ENCODE measurements at regions of chr19 and their contacts with region 1.

Region 1: GRCh38 chr19:56314562-56315077 is at the start of gene ZSCAN5A:
- DNase-seq: peak; percentile 92
- ATAC-seq: peak; percentile 80
- H3K4me3 Mint-ChIP-seq: peak within 1 kb of the TSS; percentile 95
- H3K27ac Mint-ChIP-seq: peak within 1 kb of the TSS; percentile 100
- H3K4me1 Mint-ChIP-seq: peaks cover 12% of the 10 kb centered on the region
- H3K27me3 Mint-ChIP-seq: no peaks in the 10 kb centered on the region
- CTCF ChIP-seq: no peak
- total RNA-seq, gene ZSCAN5A: 9.0 to 10.4 TPM (median 9.8 TPM) in 3 replicates

Region 2: DNA sequence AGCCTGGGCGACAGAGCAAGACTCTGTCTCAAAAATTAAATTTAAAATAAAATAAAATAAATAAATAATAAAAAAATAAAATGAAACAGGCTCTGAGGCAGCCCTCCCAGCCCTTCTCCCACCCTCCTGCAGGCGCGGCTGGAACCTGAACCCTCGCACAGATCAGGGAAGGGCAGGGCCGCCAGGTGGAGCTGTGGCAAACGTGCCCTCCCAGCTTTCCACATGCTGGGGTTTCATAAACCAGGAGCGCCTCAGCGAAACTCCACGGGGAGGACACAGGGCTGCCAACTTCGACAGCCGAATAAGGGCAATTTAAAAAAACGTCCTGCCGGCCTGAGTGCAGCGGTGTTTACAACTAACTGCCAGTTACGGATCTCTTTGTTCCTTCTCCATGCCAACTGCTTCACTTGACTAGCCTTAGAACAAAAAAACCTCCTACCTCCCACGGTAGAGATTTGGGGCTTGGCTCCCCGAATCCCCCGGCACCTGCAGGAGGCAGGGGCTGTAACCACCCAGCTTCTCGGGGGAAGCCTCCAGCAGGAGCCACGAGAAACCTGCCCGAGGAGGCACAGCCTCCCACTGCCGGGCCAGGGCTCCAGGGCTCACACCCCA is 209.4 kb before region 1 on chr19:
- CTCF ChIA-PET with region 1: interaction called, 11 read pairs
- POLR2A ChIA-PET with region 1: no interaction called
- DNase-seq: peak; percentile 87
- ATAC-seq: peak; percentile 86
- H3K4me3 Mint-ChIP-seq: 0 out of 2 replicates have a peak overlapping the region, but pooled peaks have one; percentile 12
- H3K27ac Mint-ChIP-seq: peak overlapping the region; percentile 91
- H3K4me1 Mint-ChIP-seq: peaks cover 42% of the 10 kb centered on the region
- H3K27me3 Mint-ChIP-seq: no peaks in the 10 kb centered on the region
- CTCF ChIP-seq: peak; percentile 60

Region 3: GRCh38 chr19:56176881-56177280 is 137.7 kb before region 1 on chr19:
- CTCF ChIA-PET with region 1: interaction called, 14 read pairs
- POLR2A ChIA-PET with region 1: no interaction called
- DNase-seq: no peak
- ATAC-seq: no peak
- H3K4me3 Mint-ChIP-seq: no peak overlapping the region
- H3K27ac Mint-ChIP-seq: no peak overlapping the region
- H3K4me1 Mint-ChIP-seq: peaks cover 4% of the 10 kb centered on the region; the same call in 1 of the 2 replicates
- H3K27me3 Mint-ChIP-seq: peaks cover 2% of the 10 kb centered on the region; the same call in 1 of the 2 replicates
- CTCF ChIP-seq: no peak

Region 4: DNA sequence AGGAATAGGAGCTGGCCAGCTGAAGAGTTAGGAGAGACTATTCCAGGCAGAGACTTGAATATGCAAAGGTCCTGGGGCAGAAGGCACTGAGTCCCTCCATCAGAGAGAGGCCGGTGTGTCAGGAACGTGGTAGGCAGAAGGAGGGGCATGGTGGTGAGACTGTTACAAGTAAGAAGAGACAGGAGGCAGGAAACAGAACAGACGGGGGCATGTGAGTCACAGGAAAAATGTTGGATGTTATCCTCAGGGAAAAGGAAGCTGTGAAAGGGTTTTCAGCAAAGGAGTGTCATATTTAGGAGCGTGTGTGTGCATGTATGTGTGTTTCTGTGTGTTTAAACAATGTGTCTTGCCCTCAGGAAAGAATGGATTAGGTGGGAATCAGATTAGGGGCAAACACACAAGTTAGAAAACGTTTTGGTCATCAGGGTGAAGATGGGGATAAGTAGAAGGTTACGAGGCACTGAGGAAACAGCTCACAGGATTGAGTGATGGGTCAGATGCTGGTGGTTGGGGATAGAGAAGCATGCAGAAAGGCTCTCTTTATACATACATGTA is 41.0 kb before region 1 on chr19:
- CTCF ChIA-PET with region 1: interaction called, 17 read pairs
- POLR2A ChIA-PET with region 1: no interaction called
- DNase-seq: no peak
- ATAC-seq: no peak
- H3K4me3 Mint-ChIP-seq: no peak overlapping the region
- H3K27ac Mint-ChIP-seq: no peak overlapping the region
- H3K4me1 Mint-ChIP-seq: no peaks in the 10 kb centered on the region
- H3K27me3 Mint-ChIP-seq: no peaks in the 10 kb centered on the region; the same call in 1 of the 2 replicates
- CTCF ChIP-seq: no peak

Region 5: GRCh38 chr19:56301182-56301581 is 13.4 kb before region 1 on chr19:
- CTCF ChIA-PET with region 1: interaction called, 43 read pairs
- POLR2A ChIA-PET with region 1: no interaction called
- DNase-seq: no peak
- ATAC-seq: peak; percentile 38; the same call in 1 of the 2 replicates
- H3K4me3 Mint-ChIP-seq: no peak overlapping the region
- H3K27ac Mint-ChIP-seq: no peak overlapping the region
- H3K4me1 Mint-ChIP-seq: no peaks in the 10 kb centered on the region
- H3K27me3 Mint-ChIP-seq: no peaks in the 10 kb centered on the region
- CTCF ChIP-seq: no peak

Region 6: DNA sequence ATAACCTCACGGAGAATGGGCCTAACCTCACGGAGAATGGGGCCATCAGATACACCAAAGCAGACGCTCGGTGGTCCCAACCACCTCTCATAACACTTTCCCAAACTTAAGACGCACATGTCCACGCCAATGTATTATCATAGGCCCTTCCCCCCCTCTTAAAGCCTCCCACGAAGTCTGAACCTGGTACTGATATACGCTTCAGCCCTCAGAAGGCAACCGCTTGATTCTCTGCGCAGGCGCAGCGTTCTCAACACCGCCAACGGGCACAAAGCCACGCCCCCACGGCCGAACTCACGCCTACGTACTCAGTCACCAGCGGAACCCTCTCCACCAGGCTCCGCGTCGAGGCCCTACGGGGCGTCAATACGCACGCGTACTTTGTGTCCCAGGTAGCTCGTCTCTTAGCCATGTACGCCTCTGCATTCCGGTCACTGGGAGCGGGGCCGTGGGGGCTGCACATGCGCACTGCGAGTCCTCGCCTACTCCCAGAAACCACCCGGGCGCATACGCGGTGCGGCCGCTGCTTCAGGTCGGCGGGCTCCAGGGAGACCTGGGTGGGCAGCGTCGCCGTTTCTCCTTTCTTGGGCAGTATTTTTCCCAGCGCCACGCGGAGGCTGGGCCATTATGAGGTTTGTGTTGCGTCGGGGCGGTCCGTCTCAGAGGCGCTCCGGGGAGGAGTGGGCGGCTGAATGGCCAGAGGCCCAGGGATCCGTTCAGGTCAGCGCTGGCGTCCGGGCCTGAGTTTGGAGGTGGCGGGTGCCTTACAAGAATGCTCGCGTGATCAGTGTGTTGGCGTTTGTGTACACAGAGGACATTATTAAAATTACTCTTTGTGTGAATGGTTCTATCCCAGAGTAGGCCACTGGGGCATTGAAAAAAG is 53.5 kb after region 1 on chr19:
- CTCF ChIA-PET with region 1: interaction called, 12 read pairs
- POLR2A ChIA-PET with region 1: no interaction called
- DNase-seq: peak; percentile 95
- ATAC-seq: peak; percentile 100
- H3K4me3 Mint-ChIP-seq: peak overlapping the region; percentile 88
- H3K27ac Mint-ChIP-seq: peak overlapping the region; percentile 94
- H3K4me1 Mint-ChIP-seq: peaks cover 14% of the 10 kb centered on the region
- H3K27me3 Mint-ChIP-seq: no peaks in the 10 kb centered on the region; the same call in 1 of the 2 replicates
- CTCF ChIP-seq: no peak